ENCODE measurements at regions of chr9 and their contacts with region 1.

Region 1: GRCh38 chr9:94783102-94783664 is 56.7 kb downstream of the AOPEP start:
- DNase-seq: peak; percentile 99
- H3K4me3 ChIP-seq: no peak overlapping the region
- H3K27ac ChIP-seq: peak overlapping the region; percentile 1
- H3K4me1 ChIP-seq: peaks cover 8% of the 10 kb centered on the region
- H3K27me3 ChIP-seq: no peaks in the 10 kb centered on the region
- CTCF ChIP-seq: peak; percentile 73 to 80

Region 2: GRCh38 chr9:94668418-94668932 is 114.7 kb before region 1 on chr9:
- CTCF ChIA-PET with region 1: no interaction called
- dilution Hi-C with region 1: no loop called
- in situ Hi-C with region 1: no loop called
- intact Hi-C with region 1: loop called (anchors 2 kb)
- DNase-seq: no peak
- H3K4me3 ChIP-seq: no peak overlapping the region
- H3K27ac ChIP-seq: no peak overlapping the region
- H3K4me1 ChIP-seq: peaks cover 16% of the 10 kb centered on the region
- H3K27me3 ChIP-seq: no peaks in the 10 kb centered on the region
- CTCF ChIP-seq: no peak

Region 3: DNA sequence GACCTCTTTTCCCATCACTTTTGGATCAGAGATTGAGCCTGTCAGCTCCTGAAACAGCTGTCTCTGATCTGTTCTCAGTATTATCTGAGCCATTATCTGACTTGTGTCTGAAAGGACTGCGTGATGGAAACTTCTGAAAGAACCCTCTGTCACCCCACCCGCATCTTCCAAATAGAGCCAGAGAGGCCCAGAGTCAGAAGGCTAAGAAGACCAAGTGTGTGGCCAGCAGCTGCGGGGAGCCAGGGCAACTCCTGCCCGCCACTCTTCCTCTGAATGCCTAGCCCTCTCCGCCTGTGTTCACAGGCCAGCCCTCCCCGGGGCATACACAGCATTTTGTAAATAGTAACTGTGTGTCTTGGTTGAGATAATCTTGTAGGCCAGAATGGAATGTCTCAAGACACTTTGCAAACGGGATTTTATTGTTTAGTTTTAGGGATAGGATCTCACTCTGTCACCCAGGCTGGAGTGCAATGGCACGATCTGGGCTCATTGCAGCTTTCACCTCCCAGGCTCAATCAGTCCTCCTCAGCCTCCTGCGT is 36.0 kb after region 1 on chr9:
- CTCF ChIA-PET with region 1: no interaction called
- dilution Hi-C with region 1: no loop called
- in situ Hi-C with region 1: no loop called
- intact Hi-C with region 1: loop called (anchors 2 kb)
- DNase-seq: no peak
- H3K4me3 ChIP-seq: no peak overlapping the region
- H3K27ac ChIP-seq: peak overlapping the region; percentile 12
- H3K4me1 ChIP-seq: peaks cover 22% of the 10 kb centered on the region
- H3K27me3 ChIP-seq: no peaks in the 10 kb centered on the region
- CTCF ChIP-seq: no peak

Region 4: GRCh38 chr9:94860968-94861871 is 78.0 kb after region 1 on chr9:
- CTCF ChIA-PET with region 1: no interaction called
- dilution Hi-C with region 1: no loop called
- in situ Hi-C with region 1: no loop called
- intact Hi-C with region 1: no loop called
- DNase-seq: no peak
- H3K4me3 ChIP-seq: no peak overlapping the region
- H3K27ac ChIP-seq: no peak overlapping the region
- H3K4me1 ChIP-seq: no peaks in the 10 kb centered on the region
- H3K27me3 ChIP-seq: no peaks in the 10 kb centered on the region
- CTCF ChIP-seq: no peak

Region 5: DNA sequence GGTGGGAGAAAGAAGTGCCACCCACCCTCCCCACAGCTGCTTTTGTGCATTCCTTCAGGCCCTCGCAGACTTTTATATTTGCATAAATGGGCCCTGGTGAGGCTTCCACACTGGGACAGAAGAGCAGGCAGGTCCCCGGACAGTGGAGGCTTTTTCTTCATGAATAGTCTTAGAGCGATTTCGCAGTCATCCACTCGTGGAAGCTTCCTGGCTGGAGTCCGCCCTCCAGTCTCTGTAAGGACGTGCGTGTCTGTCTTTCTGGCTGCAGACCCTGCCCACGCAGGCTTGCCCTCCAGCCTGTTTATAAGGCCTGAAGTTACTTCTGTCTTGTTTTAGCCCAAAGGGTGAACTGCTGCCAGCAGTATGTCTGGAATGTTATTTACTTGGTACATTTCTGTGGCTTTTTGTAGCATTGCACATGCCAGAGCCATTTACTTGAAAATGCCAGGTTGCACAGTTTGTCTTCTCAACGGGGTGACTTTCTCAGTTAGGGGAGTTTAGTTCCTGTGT is 139.0 kb after region 1 on chr9:
- CTCF ChIA-PET with region 1: no interaction called
- dilution Hi-C with region 1: loop called (anchors 5 kb)
- in situ Hi-C with region 1: no loop called
- intact Hi-C with region 1: loop called (anchors 1 kb)
- DNase-seq: peak; percentile 69
- H3K4me3 ChIP-seq: no peak overlapping the region
- H3K27ac ChIP-seq: peak overlapping the region; percentile 62
- H3K4me1 ChIP-seq: peaks cover 64% of the 10 kb centered on the region
- H3K27me3 ChIP-seq: no peaks in the 10 kb centered on the region
- CTCF ChIP-seq: no peak

Region 6: GRCh38 chr9:94973451-94973941 is 190.3 kb after region 1 on chr9:
- CTCF ChIA-PET with region 1: no interaction called
- dilution Hi-C with region 1: no loop called
- in situ Hi-C with region 1: no loop called
- intact Hi-C with region 1: no loop called
- DNase-seq: no peak
- H3K4me3 ChIP-seq: no peak overlapping the region
- H3K27ac ChIP-seq: no peak overlapping the region
- H3K4me1 ChIP-seq: no peaks in the 10 kb centered on the region
- H3K27me3 ChIP-seq: no peaks in the 10 kb centered on the region
- CTCF ChIP-seq: no peak

Region 7: GRCh38 chr9:95048225-95049087 is 265.3 kb after region 1 on chr9:
- CTCF ChIA-PET with region 1: no interaction called
- dilution Hi-C with region 1: no loop called
- in situ Hi-C with region 1: no loop called
- intact Hi-C with region 1: loop called (anchors 1 kb)
- DNase-seq: peak; percentile 83
- H3K4me3 ChIP-seq: peak overlapping the region; percentile 61 to 66 (median 65)
- H3K27ac ChIP-seq: peak overlapping the region; percentile 78
- H3K4me1 ChIP-seq: peaks cover 15% of the 10 kb centered on the region
- H3K27me3 ChIP-seq: no peaks in the 10 kb centered on the region
- CTCF ChIP-seq: no peak

Region 8: GRCh38 chr9:95127249-95128176 is 344.3 kb after region 1 on chr9:
- CTCF ChIA-PET with region 1: no interaction called
- dilution Hi-C with region 1: no loop called
- in situ Hi-C with region 1: loop called (anchors 5 kb)
- intact Hi-C with region 1: loop called (anchors 1 kb)
- DNase-seq: peak; percentile 65
- H3K4me3 ChIP-seq: peak overlapping the region; percentile 6 to 44 (median 29)
- H3K27ac ChIP-seq: no peak overlapping the region
- H3K4me1 ChIP-seq: peaks cover 5% of the 10 kb centered on the region
- H3K27me3 ChIP-seq: no peaks in the 10 kb centered on the region
- CTCF ChIP-seq: peak; percentile 94 to 100

Measured in mammary epithelial cell (primary cell).